Endothelial cell of umbilical vein (primary cell): ENCODE measurements at regions of chr5 and their contacts with region 1.

Region 1: DNA sequence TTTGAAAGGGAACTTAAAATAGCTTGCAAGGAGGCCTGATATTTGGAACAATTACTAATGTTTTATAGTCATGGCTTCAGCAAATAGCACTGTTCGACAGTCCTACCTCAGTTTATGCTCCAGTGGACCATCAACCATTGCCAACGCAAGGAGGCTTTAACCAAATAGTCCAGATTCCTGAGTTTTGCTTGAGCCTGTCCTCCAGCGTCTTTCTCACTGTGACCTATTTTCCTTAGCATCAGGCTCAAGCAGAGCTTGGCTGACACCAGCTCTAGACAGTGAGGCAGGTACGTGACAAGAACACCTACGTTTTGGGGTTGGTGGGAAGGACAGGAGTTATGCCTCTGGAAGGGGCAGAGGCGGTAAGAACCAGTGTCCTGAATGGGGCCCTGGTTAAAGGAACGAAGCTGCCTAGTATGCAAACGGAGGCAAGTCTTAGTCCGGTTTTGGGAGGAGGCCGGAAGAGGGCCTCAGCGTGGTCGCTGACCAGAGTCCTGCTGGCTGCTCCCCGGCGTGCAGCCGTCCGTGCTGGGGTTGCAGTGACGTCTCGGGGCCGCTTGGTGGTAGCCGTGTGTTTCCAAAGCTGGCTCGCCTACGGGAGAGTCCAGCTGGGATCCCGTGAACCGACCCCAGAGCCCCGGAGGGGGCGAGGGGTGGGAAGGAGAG is 998 bp upstream of the FGF18 start:
- DNase-seq: peak; percentile 69
- H3K4me3 ChIP-seq: peak overlapping the region in 1 of 3 experiments; percentile 23
- H3K27ac ChIP-seq: no peak overlapping the region
- H3K4me1 ChIP-seq: peaks cover 13% of the 10 kb centered on the region
- H3K27me3 ChIP-seq: peaks cover 5 to 25% of the 10 kb centered on the region in 2 experiments
- CTCF ChIP-seq: peak; percentile 87 to 96
- POLR2A ChIP-seq: no peak

Region 2: GRCh38 chr5:170681013-170681433 is 737.4 kb before region 1 on chr5:
- CTCF ChIA-PET with region 1: no interaction called
- POLR2A ChIA-PET with region 1: no interaction called
- dilution Hi-C with region 1: no loop called
- intact Hi-C with region 1: no loop called
- DNase-seq: peak; percentile 43
- H3K4me3 ChIP-seq: no peak overlapping the region
- H3K27ac ChIP-seq: no peak overlapping the region
- H3K4me1 ChIP-seq: no peaks in the 10 kb centered on the region
- H3K27me3 ChIP-seq: peaks cover 0 to 3% of the 10 kb centered on the region in 2 experiments
- CTCF ChIP-seq: no peak
- POLR2A ChIP-seq: no peak

Region 3: DNA sequence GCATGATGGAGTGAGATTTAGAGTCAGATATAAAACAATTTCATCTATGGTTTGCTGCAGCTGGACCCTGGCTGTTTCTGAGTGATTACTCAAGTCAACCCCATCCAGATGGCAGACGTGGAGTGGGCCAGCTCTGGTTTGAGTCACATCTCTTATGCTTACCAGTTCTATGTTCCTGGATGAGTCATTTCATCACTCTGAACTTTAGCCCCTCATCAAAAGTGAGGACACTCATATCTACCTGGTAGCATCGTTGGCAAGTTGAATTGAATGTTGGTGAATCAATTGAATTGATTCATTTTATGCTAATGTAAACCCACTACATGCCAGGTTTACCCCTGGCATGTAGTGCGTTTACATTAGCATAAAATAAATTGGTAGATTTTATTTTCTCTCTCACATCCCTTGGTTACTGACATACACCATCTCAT is 177.4 kb after region 1 on chr5:
- CTCF ChIA-PET with region 1: interaction called, 4 read pairs
- POLR2A ChIA-PET with region 1: no interaction called
- dilution Hi-C with region 1: no loop called
- intact Hi-C with region 1: loop called (anchors 5 kb)
- DNase-seq: peak; percentile 79
- H3K4me3 ChIP-seq: no peak overlapping the region
- H3K27ac ChIP-seq: peak overlapping the region; percentile 63
- H3K4me1 ChIP-seq: peaks cover 22% of the 10 kb centered on the region
- H3K27me3 ChIP-seq: peaks cover 0 to 2% of the 10 kb centered on the region in 2 experiments
- CTCF ChIP-seq: no peak
- POLR2A ChIP-seq: no peak

Region 4: DNA sequence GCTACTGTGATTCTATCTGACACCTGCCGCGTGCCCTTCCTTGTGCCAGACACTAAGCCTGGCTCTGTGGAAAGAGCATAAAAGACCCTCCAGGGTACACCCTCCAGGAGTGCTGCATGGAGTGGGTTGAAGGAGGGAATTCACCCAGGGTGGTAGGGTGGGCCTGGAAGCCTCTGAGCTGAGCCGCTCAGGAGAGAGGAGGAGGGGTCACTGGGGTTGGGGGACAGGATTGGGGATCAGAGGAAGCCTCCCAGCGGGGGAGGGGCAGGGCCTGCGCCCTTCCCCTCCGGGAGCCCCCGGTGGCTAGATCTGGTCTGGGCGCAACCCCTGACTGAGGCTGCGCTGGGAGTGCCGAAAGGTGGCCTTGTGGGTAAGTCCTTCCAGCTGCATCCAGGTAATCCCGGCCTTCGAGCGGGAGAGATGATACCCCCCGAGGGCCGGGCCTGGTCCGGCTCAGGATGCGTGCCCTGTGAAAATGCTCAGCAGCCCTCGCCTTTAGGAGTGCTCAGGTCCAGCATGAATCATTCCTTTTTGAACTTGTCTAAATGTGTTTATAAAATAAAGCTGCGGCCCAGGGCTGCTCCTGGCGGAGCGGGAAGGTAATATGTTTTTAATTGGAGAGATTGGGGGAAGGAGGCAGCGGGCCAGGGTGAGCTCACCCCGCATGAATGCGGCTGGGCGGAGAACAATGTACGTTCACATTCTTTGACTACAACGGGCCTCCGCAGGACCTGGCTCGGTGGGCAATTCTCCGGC is 249.1 kb after region 1 on chr5:
- CTCF ChIA-PET with region 1: no interaction called
- POLR2A ChIA-PET with region 1: no interaction called
- dilution Hi-C with region 1: no loop called
- intact Hi-C with region 1: loop called (anchors 5 kb)
- DNase-seq: peak; percentile 88
- H3K4me3 ChIP-seq: no peak overlapping the region
- H3K27ac ChIP-seq: peak overlapping the region; percentile 78
- H3K4me1 ChIP-seq: peaks cover 12% of the 10 kb centered on the region
- H3K27me3 ChIP-seq: no peaks in the 10 kb centered on the region
- CTCF ChIP-seq: peak; percentile 12 to 22
- POLR2A ChIP-seq: no peak

Region 5: GRCh38 chr5:171907725-171908343 is 489.4 kb after region 1 on chr5:
- CTCF ChIA-PET with region 1: interaction called, 77 read pairs
- POLR2A ChIA-PET with region 1: interaction called, 4 read pairs
- dilution Hi-C with region 1: no loop called
- intact Hi-C with region 1: loop called (anchors 1 kb)
- DNase-seq: peak; percentile 65
- H3K4me3 ChIP-seq: no peak overlapping the region
- H3K27ac ChIP-seq: no peak overlapping the region
- H3K4me1 ChIP-seq: no peaks in the 10 kb centered on the region
- H3K27me3 ChIP-seq: no peaks in the 10 kb centered on the region
- CTCF ChIP-seq: peak; percentile 52 to 58
- POLR2A ChIP-seq: no peak

Region 6: DNA sequence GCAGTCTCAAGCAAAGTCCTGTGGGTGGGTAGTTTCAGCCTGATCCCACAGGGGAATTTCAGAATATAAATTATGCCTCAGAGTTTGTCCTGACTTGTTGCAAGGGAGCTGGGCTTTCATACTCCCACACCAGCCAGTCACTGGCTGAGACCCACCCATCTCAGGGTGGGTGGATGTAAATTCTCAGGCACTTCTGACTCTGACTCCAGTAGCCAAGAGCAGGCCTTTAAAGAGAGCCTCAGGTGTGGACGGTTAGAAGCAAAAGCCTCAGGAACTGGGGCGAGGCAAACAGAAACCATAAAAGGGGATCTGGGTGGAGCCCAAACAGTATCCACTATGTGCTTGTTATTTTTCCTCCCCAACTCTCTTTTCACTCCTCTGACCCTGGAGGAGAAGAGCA is 616.6 kb after region 1 on chr5:
- CTCF ChIA-PET with region 1: no interaction called
- POLR2A ChIA-PET with region 1: no interaction called
- dilution Hi-C with region 1: no loop called
- intact Hi-C with region 1: loop called (anchors 1 kb)
- DNase-seq: no peak
- H3K4me3 ChIP-seq: no peak overlapping the region
- H3K27ac ChIP-seq: no peak overlapping the region
- H3K4me1 ChIP-seq: no peaks in the 10 kb centered on the region
- H3K27me3 ChIP-seq: peaks cover 5 to 12% of the 10 kb centered on the region in 2 experiments
- CTCF ChIP-seq: no peak
- POLR2A ChIP-seq: no peak